Heart right ventricle (tissue), 16 donors: ENCODE measurements at regions of chr3 and their contacts with region 1.

Region 1: DNA sequence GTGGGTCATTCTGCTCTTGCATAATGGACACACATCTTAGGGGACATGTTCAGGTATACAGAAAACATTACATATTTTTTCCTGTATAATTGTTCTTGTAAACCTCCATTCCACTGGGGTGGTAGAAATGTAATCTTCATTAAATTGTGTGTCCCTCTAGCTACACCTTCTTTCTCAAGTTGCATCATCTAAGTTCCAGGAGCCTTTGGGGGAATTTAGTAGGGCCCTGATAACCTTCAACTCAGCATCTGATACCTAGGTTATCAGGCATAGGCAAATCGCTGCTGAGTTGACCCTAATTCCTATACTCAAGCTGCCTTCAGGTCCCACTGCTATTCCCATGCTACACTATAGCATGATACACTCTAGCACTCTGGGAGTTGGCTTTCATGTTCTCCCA is 19.1 kb upstream of the CLASP2 start:
- DNase-seq: no peak
- ATAC-seq: no peak
- H3K4me3 ChIP-seq: no peak overlapping the region
- H3K27ac ChIP-seq: no peak overlapping the region
- H3K4me1 ChIP-seq: no peaks in the 10 kb centered on the region
- H3K27me3 ChIP-seq: peaks cover 0 to 5% (median 0%) of the 10 kb centered on the region in 7 donors
- CTCF ChIP-seq: no peak

Region 2: GRCh38 chr3:33186524-33187367 is 550.4 kb before region 1 on chr3:
- intact Hi-C with region 1: no loop called
- DNase-seq: no peak
- ATAC-seq: no peak
- H3K4me3 ChIP-seq: no peak overlapping the region
- H3K27ac ChIP-seq: no peak overlapping the region
- H3K4me1 ChIP-seq: peaks cover 0 to 4% (median 0%) of the 10 kb centered on the region in 9 donors
- H3K27me3 ChIP-seq: no peaks in the 10 kb centered on the region
- CTCF ChIP-seq: no peak

Region 3: GRCh38 chr3:33331414-33331813 is 405.7 kb before region 1 on chr3:
- intact Hi-C with region 1: no loop called
- DNase-seq: no peak
- ATAC-seq: no peak
- H3K4me3 ChIP-seq: no peak overlapping the region
- H3K27ac ChIP-seq: no peak overlapping the region
- H3K4me1 ChIP-seq: no peaks in the 10 kb centered on the region
- H3K27me3 ChIP-seq: no peaks in the 10 kb centered on the region
- CTCF ChIP-seq: no peak

Region 4: GRCh38 chr3:33544126-33544525 is 193.0 kb before region 1 on chr3:
- intact Hi-C with region 1: no loop called
- DNase-seq: no peak
- ATAC-seq: no peak
- H3K4me3 ChIP-seq: no peak overlapping the region
- H3K27ac ChIP-seq: no peak overlapping the region
- H3K4me1 ChIP-seq: peaks cover 0 to 3% (median 0%) of the 10 kb centered on the region in 9 donors
- H3K27me3 ChIP-seq: no peaks in the 10 kb centered on the region
- CTCF ChIP-seq: no peak

Region 5: DNA sequence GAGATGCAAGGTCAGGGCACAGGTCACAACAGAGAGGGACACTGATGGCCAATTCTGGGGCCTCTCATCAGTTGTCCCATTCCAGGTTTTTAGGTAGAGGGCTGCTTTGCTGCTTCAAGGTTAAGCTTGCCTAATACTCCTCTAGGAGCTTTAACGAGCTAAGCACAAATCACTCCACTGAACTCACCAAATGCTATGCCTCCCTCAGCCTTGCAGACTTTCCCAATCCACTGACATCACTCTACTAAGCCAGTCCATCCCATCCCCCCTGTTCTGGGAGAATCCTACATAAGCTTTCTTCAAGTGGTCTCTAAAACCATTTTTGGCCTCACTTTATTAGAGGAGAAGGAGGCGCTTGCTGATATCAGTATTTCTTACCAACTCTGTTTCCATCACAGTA is 36.5 kb after region 1 on chr3:
- intact Hi-C with region 1: loop called in 1 of 10 experiments (anchors 5 kb)
- DNase-seq: no peak
- ATAC-seq: no peak
- H3K4me3 ChIP-seq: no peak overlapping the region
- H3K27ac ChIP-seq: no peak overlapping the region
- H3K4me1 ChIP-seq: no peaks in the 10 kb centered on the region
- H3K27me3 ChIP-seq: no peaks in the 10 kb centered on the region
- CTCF ChIP-seq: no peak

Region 6: DNA sequence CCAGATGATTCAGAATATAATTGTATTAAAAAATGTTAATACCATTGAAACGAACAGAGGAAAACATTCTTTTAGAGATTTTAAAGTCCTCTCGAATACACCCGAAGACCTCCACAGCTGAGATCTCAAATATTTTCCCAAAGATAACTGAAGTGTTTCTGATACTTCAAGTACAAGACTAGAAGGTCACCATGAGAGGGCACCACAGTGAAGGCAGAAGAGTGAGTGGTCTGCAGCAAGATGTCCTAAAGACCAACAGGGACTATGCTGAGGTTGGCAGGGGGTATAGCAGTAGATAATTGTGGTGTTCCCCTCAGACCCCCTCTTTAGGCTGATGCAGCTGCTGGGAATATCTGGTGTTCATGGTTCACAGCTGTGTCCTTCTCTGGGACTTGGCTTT is 217.8 kb after region 1 on chr3:
- intact Hi-C with region 1: no loop called
- DNase-seq: no peak
- ATAC-seq: no peak
- H3K4me3 ChIP-seq: no peak overlapping the region
- H3K27ac ChIP-seq: no peak overlapping the region
- H3K4me1 ChIP-seq: no peaks in the 10 kb centered on the region
- H3K27me3 ChIP-seq: peaks cover 0 to 6% (median 0%) of the 10 kb centered on the region in 7 donors
- CTCF ChIP-seq: no peak